ENCODE measurements at regions of chr10 and their contacts with region 1.

Region 1: DNA sequence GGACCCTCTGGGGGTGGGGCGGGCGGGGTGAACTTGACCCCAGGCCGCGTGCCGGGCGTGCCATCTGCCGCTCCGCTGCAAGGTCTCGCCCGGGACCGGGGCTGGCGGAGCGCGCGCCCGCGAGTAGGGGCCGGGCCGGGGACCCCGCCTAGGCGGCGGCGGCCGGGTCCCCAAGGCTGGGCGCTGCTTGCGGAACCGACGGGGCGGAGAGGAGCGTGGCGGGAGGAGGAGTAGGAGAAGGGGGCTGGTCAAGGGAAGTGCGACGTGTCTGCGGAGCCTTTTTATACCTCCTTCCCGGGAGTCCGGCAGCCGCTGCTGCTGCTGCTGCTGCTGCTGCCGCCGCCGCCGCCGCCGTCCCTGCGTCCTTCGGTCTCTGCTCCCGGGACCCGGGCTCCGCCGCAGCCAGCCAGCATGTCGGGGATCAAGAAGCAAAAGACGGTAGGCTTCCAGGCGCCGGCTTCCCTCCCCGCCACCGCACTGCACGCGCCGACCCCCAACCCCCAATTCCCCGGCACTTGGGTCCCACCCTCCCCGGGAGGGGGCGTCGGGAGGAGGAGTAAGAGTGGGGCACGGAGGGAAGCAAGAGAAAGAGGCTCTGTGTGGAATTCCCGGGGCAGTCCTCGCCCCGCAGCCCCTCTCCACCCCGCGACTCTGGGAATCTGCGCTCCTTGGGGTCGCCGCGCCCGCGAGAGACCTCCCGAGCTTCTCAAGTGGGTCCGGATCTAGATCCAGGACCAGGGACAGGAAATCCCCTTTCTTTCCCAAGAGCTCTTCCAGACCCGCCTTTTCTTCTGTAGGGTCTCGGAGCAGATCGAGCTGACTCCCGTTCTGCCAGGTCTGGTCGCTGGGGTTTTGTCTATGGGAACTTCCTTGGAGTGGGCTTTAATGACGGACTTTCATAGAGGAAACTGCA is at the start of gene PAPSS2:
- DNase-seq: peak; percentile 84
- ATAC-seq: peak; percentile 90
- total RNA-seq, gene PAPSS2: 8.6 TPM

Region 2: GRCh38 chr10:87531908-87532622 is 127.8 kb before region 1 on chr10:
- intact Hi-C with region 1: loop called (anchors 10 kb)
- DNase-seq: no peak
- ATAC-seq: peak; percentile 78

Measured in Right ventricle myocardium superior (tissue), 1 donor.